ENCODE measurements at regions of chr9 and their contacts with region 1.

Region 1: GRCh38 chr9:114405294-114406034 is 17.7 kb upstream of the AKNA start:
- DNase-seq: peak; percentile 67 to 85 (median 72)
- H3K4me3 ChIP-seq: no peak overlapping the region
- H3K4me3 Mint-ChIP-seq: no peak overlapping the region
- H3K27ac ChIP-seq: no peak overlapping the region
- H3K27ac Mint-ChIP-seq: peak overlapping the region in 5 of 8 donors; percentile 0 to 83 (median 20)
- H3K4me1 ChIP-seq: peaks cover 8% of the 10 kb centered on the region
- H3K4me1 Mint-ChIP-seq: peaks cover 5 to 6% (median 6%) of the 10 kb centered on the region in 3 donors
- H3K27me3 ChIP-seq: no peaks in the 10 kb centered on the region
- H3K27me3 Mint-ChIP-seq: no peaks in the 10 kb centered on the region

Region 2: GRCh38 chr9:114366334-114367128 is 38.9 kb before region 1 on chr9:
- CTCF ChIA-PET with region 1: interaction called, 11 read pairs
- POLR2A ChIA-PET with region 1: interaction called, 3 read pairs
- DNase-seq: peak in 3 of 5 donors; percentile 71 to 78 (median 75)
- H3K4me3 ChIP-seq: peak overlapping the region; percentile 16
- H3K4me3 Mint-ChIP-seq: peak overlapping the region; percentile 47 to 82 (median 73)
- H3K27ac ChIP-seq: peak overlapping the region; percentile 68
- H3K27ac Mint-ChIP-seq: peak overlapping the region; percentile 55 to 99 (median 96)
- H3K4me1 ChIP-seq: peaks cover 98% of the 10 kb centered on the region
- H3K4me1 Mint-ChIP-seq: peaks cover 85 to 100% (median 90%) of the 10 kb centered on the region in 3 donors
- H3K27me3 ChIP-seq: no peaks in the 10 kb centered on the region
- H3K27me3 Mint-ChIP-seq: peaks cover 0 to 4% of the 10 kb centered on the region in 2 donors

Region 3: GRCh38 chr9:114487607-114488300 is 82.3 kb after region 1 on chr9:
- CTCF ChIA-PET with region 1: interaction called, 10 read pairs
- POLR2A ChIA-PET with region 1: no interaction called
- DNase-seq: peak; percentile 16 to 75 (median 61)
- H3K4me3 ChIP-seq: no peak overlapping the region
- H3K4me3 Mint-ChIP-seq: no peak overlapping the region
- H3K27ac ChIP-seq: no peak overlapping the region
- H3K27ac Mint-ChIP-seq: peak overlapping the region in 3 of 8 donors; percentile 7 to 25 (median 12)
- H3K4me1 ChIP-seq: peaks cover 11% of the 10 kb centered on the region
- H3K4me1 Mint-ChIP-seq: peaks cover 24 to 33% (median 26%) of the 10 kb centered on the region in 3 donors
- H3K27me3 ChIP-seq: no peaks in the 10 kb centered on the region
- H3K27me3 Mint-ChIP-seq: peaks cover 0 to 2% of the 10 kb centered on the region in 2 donors

Region 4: DNA sequence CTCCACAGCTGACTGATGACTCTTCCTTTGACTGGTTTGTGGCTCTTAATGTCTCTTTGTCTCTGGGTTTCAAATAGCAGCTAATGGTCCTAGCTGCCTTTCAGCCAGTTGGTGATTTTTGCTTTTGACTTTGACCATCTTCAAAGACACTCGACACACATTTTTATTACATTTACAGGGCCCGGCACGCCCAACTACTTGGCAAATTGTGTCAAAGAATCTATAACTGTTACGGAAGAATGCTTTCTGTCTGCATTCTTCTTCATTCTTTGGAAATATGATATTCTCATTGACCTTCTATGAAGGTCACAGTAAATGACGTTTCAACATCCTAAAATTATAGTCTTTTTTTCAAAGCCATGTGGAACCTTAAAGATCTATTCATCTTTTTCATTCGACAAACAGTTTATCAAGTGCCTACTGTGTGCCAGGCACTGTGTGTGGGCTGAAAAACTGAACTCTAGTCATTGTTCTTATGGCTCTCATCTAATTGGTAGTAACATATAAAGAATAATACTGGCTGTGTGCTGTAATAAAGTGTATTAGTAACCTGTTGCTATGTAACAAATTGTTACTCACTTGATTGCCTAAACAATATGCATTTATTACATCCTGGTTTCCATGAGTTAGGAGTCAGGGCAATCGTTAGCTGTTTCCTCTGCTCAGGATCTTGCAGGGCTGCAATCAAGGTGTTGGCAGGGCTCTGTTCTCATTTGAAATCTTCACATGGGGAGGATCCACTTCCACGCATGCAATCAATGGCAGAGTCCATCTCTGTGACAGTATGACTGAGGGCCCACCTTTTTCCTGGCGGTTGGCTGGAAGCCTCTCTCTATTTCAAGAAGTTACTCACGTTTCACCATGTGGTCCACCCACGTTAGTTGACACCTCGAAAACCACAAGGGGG is 106.8 kb after region 1 on chr9:
- CTCF ChIA-PET with region 1: interaction called, 45 read pairs
- POLR2A ChIA-PET with region 1: no interaction called
- DNase-seq: no peak
- H3K4me3 ChIP-seq: no peak overlapping the region
- H3K4me3 Mint-ChIP-seq: peak overlapping the region in 1 of 7 donors; percentile 8
- H3K27ac ChIP-seq: no peak overlapping the region
- H3K27ac Mint-ChIP-seq: peak overlapping the region in 1 of 8 donors; percentile 55
- H3K4me1 ChIP-seq: no peaks in the 10 kb centered on the region
- H3K4me1 Mint-ChIP-seq: peaks cover 5 to 19% (median 8%) of the 10 kb centered on the region in 3 donors
- H3K27me3 ChIP-seq: peaks cover 9% of the 10 kb centered on the region
- H3K27me3 Mint-ChIP-seq: peaks cover 7 to 42% of the 10 kb centered on the region in 2 donors

Region 5: DNA sequence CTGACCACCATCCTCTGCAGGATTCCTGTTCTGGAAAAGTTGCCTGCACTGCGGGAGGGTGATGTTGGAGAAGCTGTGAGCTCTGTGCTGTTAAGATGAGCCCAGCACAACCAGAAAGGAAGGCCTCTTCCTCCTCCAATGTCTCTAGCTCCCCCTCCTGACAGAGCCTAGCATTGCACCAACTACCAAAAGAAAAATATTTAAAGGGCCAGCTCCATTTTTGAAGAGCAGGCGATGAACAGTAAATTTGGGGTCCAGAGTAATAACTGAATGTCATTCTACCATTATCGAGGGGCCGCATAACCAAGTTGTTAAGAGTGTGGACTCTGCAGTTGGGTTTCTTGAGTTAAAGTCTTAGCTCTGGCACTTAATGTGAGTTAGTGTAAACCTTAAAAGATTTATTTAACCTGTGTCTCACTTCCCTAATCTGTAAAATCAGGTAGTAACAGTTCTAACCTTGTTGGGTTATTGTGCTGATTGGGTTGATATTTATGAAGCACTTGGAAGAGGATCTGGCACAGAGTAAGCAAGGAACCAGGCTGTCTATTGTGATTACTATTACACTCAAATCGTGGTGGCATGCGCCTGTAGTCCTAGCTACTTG is 248.2 kb after region 1 on chr9:
- CTCF ChIA-PET with region 1: interaction called, 119 read pairs
- POLR2A ChIA-PET with region 1: interaction called, 11 read pairs
- DNase-seq: peak; percentile 74 to 84 (median 74)
- H3K4me3 ChIP-seq: no peak overlapping the region
- H3K4me3 Mint-ChIP-seq: no peak overlapping the region
- H3K27ac ChIP-seq: no peak overlapping the region
- H3K27ac Mint-ChIP-seq: peak overlapping the region in 1 of 8 donors; percentile 35
- H3K4me1 ChIP-seq: peaks cover 10% of the 10 kb centered on the region
- H3K4me1 Mint-ChIP-seq: peaks cover 6 to 14% (median 9%) of the 10 kb centered on the region in 3 donors
- H3K27me3 ChIP-seq: no peaks in the 10 kb centered on the region
- H3K27me3 Mint-ChIP-seq: no peaks in the 10 kb centered on the region

Measured in CD8-positive, alpha-beta memory T cell (primary cell).